Calu3 (cell line): ENCODE measurements at regions of chr12 and their contacts with region 1.

Region 1: DNA sequence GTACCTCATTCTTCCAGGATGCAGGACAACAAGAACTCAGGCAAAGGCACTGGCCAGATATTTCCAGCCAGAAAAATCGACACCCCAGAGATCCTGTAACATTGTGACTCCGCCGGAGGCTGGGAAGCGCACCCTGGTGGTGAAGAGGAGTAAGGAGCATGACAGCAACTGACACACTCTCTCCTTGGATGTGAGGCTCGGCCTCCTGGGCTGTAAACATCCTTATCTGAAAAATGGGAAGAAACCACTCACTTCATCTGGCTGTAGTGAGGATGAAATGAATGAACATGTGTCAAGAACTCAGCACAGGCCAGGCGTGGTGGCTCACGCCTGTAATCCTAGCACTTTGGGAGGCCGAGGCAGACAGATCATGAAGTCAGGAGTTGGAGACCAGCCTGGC is 27.5 kb downstream of the TCHP start:
- DNase-seq: peak; percentile 53
- H3K4me3 Mint-ChIP-seq: no peak overlapping the region
- H3K27ac Mint-ChIP-seq: no peak overlapping the region
- H3K4me1 Mint-ChIP-seq: no peaks in the 10 kb centered on the region
- H3K27me3 Mint-ChIP-seq: no peaks in the 10 kb centered on the region
- CTCF ChIP-seq: peak; percentile 51

Region 2: DNA sequence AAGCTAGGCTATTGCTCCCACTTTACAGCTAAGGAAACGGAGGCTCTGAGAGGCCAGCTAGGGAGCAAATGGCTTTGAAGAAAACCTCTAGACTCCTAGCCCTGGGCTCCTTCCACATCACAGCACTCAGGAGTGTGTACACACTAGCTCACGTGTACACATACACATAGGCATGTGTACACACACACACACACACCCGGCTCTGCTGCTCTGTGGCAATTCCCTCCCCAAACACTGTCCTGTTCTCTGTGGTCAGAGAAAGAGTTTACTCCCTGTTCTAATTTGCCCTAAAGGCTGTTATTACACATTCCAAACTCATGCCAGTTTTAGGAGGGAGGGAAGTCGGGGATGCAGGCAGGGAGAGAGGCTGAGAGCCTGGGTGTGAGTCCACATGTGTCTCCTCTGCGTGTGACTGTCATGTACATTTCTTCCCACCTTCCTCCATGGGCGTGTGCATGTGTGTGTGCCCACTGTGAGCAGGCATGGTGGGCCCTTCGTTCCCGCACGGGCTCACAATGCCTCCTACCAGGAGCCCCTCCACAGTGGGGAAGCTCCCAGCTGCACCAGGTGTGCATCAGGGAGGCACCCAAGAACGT is 108.6 kb before region 1 on chr12:
- CTCF ChIA-PET with region 1: no interaction called
- intact Hi-C with region 1: no loop called
- DNase-seq: no peak
- H3K4me3 Mint-ChIP-seq: no peak overlapping the region
- H3K27ac Mint-ChIP-seq: no peak overlapping the region
- H3K4me1 Mint-ChIP-seq: peaks cover 33% of the 10 kb centered on the region
- H3K27me3 Mint-ChIP-seq: no peaks in the 10 kb centered on the region
- CTCF ChIP-seq: no peak

Region 3: GRCh38 chr12:109844983-109845823 is 82.4 kb before region 1 on chr12:
- CTCF ChIA-PET with region 1: no interaction called
- intact Hi-C with region 1: loop called (anchors 5 kb)
- DNase-seq: peak; percentile 98
- H3K4me3 Mint-ChIP-seq: peak overlapping the region; percentile 28
- H3K27ac Mint-ChIP-seq: no peak overlapping the region
- H3K4me1 Mint-ChIP-seq: peaks cover 15% of the 10 kb centered on the region
- H3K27me3 Mint-ChIP-seq: no peaks in the 10 kb centered on the region
- CTCF ChIP-seq: peak; percentile 97

Region 4: GRCh38 chr12:110065540-110065939 is 137.9 kb after region 1 on chr12:
- CTCF ChIA-PET with region 1: no interaction called
- intact Hi-C with region 1: no loop called
- DNase-seq: no peak
- H3K4me3 Mint-ChIP-seq: no peak overlapping the region
- H3K27ac Mint-ChIP-seq: no peak overlapping the region
- H3K4me1 Mint-ChIP-seq: peaks cover 1% of the 10 kb centered on the region
- H3K27me3 Mint-ChIP-seq: peaks cover 16% of the 10 kb centered on the region
- CTCF ChIP-seq: no peak